K562 (cell line): ENCODE measurements at regions of chr3 and their contacts with region 1.

Region 1: DNA sequence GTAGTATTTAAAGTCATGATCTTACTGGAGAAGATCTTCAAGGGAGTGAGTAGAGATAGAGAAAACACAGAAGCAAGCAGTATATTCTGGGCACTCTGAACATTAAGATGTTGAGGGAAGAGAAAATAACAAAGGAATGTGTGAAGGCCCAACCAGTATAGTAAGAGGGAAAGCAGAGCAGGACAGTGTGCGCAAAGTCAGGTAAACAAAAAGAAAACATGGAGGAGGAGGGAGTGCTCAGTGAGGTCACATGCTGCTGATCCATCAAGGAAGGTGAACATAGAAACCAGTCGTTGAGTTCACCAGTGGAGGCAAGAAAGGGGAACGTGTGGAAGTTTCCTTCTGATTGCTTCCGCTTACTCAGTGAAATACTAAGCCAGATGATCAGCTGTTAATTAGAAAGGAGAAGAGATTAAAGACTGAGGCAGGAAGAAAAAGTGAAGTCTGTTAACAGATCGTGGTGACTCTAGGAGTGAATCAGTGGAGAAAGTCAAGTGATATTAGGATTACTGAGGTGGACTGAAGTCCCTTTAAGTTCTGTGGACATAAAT is 47.2 kb downstream of the OPA1 start:
- DNase-seq: no peak
- ATAC-seq: peak; percentile 51
- H3K4me3 ChIP-seq: no peak overlapping the region
- H3K27ac ChIP-seq: no peak overlapping the region; the same call in 2 of the 3 replicates
- H3K4me1 ChIP-seq: no peaks in the 10 kb centered on the region
- H3K27me3 ChIP-seq: no peaks in the 10 kb centered on the region
- CTCF ChIP-seq: no peak
- EP300 ChIP-seq: no peak
- POLR2A ChIP-seq: no peak
- RAD21 ChIP-seq: no peak

Region 2: DNA sequence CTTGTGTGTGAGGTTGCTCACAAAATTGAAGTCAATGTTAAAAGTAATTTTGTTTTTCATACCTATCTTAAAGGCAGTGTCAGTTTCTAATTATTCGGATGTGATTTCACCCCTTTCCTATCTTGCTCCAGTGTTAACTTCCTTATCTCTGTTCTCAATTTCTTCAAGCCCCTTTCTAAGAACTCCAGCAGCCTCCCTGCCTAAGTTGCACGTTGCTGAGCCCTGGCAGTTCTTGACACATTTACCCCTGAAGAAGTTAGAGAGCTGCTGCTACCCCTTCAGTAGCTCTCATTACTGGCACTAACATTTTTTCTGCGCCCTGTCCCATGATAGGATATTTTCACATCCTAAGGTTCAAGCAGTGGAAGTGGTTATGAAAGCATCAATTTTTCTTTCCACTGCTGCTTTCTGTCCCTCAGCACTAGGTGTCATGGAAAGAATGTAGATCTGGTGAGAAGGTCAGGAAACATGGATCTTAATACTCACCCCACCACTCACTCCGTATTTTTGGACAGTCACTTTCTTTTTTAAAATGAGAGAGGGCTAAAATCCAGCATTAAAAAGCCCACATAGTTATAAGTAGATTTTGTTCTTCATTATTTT is 15.7 kb after region 1 on chr3:
- CTCF ChIA-PET with region 1: no interaction called
- POLR2A ChIA-PET with region 1: interaction called, 10 read pairs
- in situ Hi-C with region 1: no loop called
- intact Hi-C with region 1: no loop called
- DNase-seq: peak in 2 of 4 experiments; percentile 21 to 65
- ATAC-seq: peak; percentile 67
- H3K4me3 ChIP-seq: no peak overlapping the region; the same call in 1 of the 2 replicates
- H3K27ac ChIP-seq: peak overlapping the region; percentile 87
- H3K4me1 ChIP-seq: peaks cover 4 to 43% of the 10 kb centered on the region in 2 experiments
- H3K27me3 ChIP-seq: no peaks in the 10 kb centered on the region
- CTCF ChIP-seq: peak in 1 of 3 experiments; percentile 46; a peak in 2 of 6 replicates
- EP300 ChIP-seq: no peak; the same call in 1 of the 2 replicates
- POLR2A ChIP-seq: no peak
- RAD21 ChIP-seq: peak; percentile 39 to 47; a peak in 3 of 4 replicates

Region 3: DNA sequence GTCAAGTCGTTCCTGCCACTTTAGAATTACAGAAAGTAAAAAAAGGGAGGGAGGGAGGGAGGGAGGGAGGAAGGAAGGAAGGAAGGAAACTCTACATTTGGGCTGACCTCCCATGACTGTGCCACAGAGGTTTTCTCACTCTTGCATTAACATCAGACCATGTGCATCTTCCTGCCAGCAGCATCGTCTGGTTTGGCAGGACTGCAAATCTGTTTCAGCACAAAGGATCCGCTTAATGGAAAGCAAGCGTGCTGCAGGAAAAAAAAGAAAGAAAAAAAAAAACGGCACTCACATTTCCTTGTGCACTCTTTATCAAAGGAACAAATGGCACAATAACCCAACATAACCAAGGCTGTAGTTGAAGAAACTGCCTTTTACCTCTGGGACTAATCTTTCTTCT is 346.9 kb after region 1 on chr3:
- CTCF ChIA-PET with region 1: no interaction called
- POLR2A ChIA-PET with region 1: no interaction called
- in situ Hi-C with region 1: no loop called
- intact Hi-C with region 1: no loop called
- DNase-seq: no peak
- ATAC-seq: no peak
- H3K4me3 ChIP-seq: no peak overlapping the region
- H3K27ac ChIP-seq: no peak overlapping the region
- H3K4me1 ChIP-seq: peaks cover 2 to 7% of the 10 kb centered on the region in 2 experiments; a peak in 2 of 5 replicates
- H3K27me3 ChIP-seq: no peaks in the 10 kb centered on the region
- CTCF ChIP-seq: no peak
- EP300 ChIP-seq: no peak
- POLR2A ChIP-seq: no peak
- RAD21 ChIP-seq: no peak